WTC11 (cell line): ENCODE measurements at regions of chr13 and their contacts with region 1.

Region 1: GRCh38 chr13:30446126-30446500 is 19.6 kb downstream of the HMGB1 start:
- DNase-seq: no peak
- ATAC-seq: peak; percentile 31
- H3K4me3 Mint-ChIP-seq: peak overlapping the region; percentile 60
- H3K27ac Mint-ChIP-seq: peak overlapping the region; percentile 86
- H3K4me1 Mint-ChIP-seq: peaks cover 27% of the 10 kb centered on the region
- H3K27me3 Mint-ChIP-seq: no peaks in the 10 kb centered on the region
- CTCF ChIP-seq: no peak

Region 2: GRCh38 chr13:30408319-30409101 is 37.6 kb before region 1 on chr13:
- CTCF ChIA-PET with region 1: interaction called, 10 read pairs
- POLR2A ChIA-PET with region 1: interaction called, 3 read pairs
- DNase-seq: peak; percentile 98
- ATAC-seq: peak; percentile 97
- H3K4me3 Mint-ChIP-seq: peak overlapping the region; percentile 56
- H3K27ac Mint-ChIP-seq: no peak overlapping the region
- H3K4me1 Mint-ChIP-seq: peaks cover 16% of the 10 kb centered on the region
- H3K27me3 Mint-ChIP-seq: peaks cover 34% of the 10 kb centered on the region
- CTCF ChIP-seq: peak; percentile 63